PC-3 (cell line): ENCODE measurements at regions of chr9 and their contacts with region 1.

Region 1: GRCh38 chr9:100426530-100427428 is at the start of gene MSANTD3:
- DNase-seq: peak; percentile 76
- ATAC-seq: peak; percentile 59
- H3K4me3 ChIP-seq: peak within 1 kb of the TSS; percentile 92
- H3K27ac ChIP-seq: peak within 1 kb of the TSS; percentile 100
- H3K4me1 ChIP-seq: peaks cover 36% of the 10 kb centered on the region
- H3K27me3 ChIP-seq: no peaks in the 10 kb centered on the region
- CTCF ChIP-seq: no peak
- total RNA-seq, gene MSANTD3: 86.9 and 92.7 TPM in 2 replicates

Region 2: GRCh38 chr9:99819856-99820684 is 606.7 kb before region 1 on chr9:
- CTCF ChIA-PET with region 1: no interaction called
- POLR2A ChIA-PET with region 1: no interaction called
- intact Hi-C with region 1: loop called (anchors 5 kb)
- DNase-seq: peak; percentile 84
- ATAC-seq: peak; percentile 35
- H3K4me3 ChIP-seq: peak overlapping the region; percentile 89
- H3K27ac ChIP-seq: peak overlapping the region; percentile 75
- H3K4me1 ChIP-seq: peaks cover 12% of the 10 kb centered on the region; the same call in 1 of the 2 replicates
- H3K27me3 ChIP-seq: no peaks in the 10 kb centered on the region
- CTCF ChIP-seq: 0 out of 2 replicates have a peak, but pooled peaks have one; percentile 17

Region 3: GRCh38 chr9:100098887-100099721 is 327.7 kb before region 1 on chr9 and contains the starts of genes ERP44 and INVS:
- CTCF ChIA-PET with region 1: no interaction called
- POLR2A ChIA-PET with region 1: interaction called, 16 read pairs
- intact Hi-C with region 1: no loop called
- DNase-seq: peak; percentile 97
- ATAC-seq: peak; percentile 93
- H3K4me3 ChIP-seq: peak within 1 kb of the TSS; percentile 99
- H3K27ac ChIP-seq: peak within 1 kb of the TSS; percentile 71
- H3K4me1 ChIP-seq: peaks cover 28% of the 10 kb centered on the region
- H3K27me3 ChIP-seq: no peaks in the 10 kb centered on the region
- CTCF ChIP-seq: no peak
- total RNA-seq, gene ERP44: 5.8 and 7.7 TPM in 2 replicates
- total RNA-seq, gene INVS: 8.9 and 9.6 TPM in 2 replicates

Region 4: DNA sequence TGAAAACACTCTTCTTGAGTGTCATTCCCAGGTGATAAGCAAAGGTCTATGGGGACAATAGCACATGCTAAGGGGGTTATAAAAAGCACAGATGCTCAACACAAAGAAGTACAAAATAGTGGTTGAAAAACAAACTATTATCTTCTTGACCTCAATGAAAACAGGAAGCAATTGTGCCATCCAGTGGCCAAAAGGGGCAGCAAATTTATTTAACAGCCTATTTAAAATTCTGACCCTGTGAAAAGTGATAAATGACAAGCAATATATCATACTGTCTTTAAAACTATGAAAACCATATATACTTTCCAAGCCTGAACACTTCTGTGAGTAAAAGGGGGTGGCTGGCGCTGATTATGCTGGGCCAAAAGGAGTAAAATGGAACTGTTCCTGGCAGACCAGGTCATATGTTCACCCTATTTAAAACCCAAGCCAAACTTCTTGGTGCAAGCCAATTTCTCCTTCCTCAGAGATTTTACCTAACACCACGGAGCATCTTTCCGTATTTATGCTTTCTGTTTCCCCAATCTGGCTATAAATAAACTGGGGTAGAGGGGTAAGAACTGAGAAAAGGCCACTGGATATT is 103.7 kb before region 1 on chr9:
- CTCF ChIA-PET with region 1: interaction called, 13 read pairs
- POLR2A ChIA-PET with region 1: no interaction called
- intact Hi-C with region 1: no loop called
- DNase-seq: peak; percentile 44
- ATAC-seq: no peak
- H3K4me3 ChIP-seq: no peak overlapping the region
- H3K27ac ChIP-seq: no peak overlapping the region
- H3K4me1 ChIP-seq: peaks cover under 1% of the 10 kb centered on the region
- H3K27me3 ChIP-seq: no peaks in the 10 kb centered on the region
- CTCF ChIP-seq: peak; percentile 72

Region 5: DNA sequence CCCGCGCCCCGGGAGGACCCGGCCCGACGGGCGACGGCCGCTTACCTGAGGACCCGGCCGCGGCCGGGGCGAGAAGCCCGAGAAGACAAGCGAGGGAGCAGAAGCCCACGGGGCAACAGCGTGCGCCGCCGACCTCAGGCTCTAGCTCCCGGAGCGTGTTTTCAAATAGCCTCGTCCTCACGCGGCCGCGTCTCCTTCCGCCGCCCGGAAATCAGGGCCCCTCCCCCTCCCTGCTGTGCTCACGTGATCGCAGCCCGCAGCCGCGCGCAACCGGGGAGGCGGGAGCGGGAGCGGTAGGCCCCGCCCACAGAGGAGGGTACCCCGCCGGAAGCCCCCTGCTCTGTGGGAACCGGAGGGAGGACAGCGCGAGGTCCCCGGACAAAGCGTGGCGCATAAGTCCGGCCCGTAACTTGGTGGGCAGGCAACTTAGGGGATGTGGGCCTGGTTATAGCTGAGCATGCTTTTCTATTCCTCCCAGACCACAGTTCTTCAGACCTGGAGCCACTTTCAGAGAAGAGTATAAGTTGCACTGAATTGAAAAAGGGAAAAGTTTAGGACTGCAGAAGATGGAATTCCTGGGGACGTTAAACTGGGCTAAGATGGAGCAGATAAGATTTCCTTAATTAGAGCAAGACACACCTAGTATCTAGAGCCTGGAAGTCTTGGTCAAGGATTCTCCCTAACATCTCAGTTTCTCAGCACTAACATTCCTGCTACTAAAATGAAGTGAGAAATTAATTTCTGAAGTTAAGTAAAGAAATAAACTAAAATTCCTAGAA is 73.9 kb before region 1 on chr9 and contains the start of gene TEX10:
- CTCF ChIA-PET with region 1: no interaction called
- POLR2A ChIA-PET with region 1: interaction called, 11 read pairs
- intact Hi-C with region 1: loop called (anchors 2 kb)
- DNase-seq: peak; percentile 75
- ATAC-seq: peak; percentile 76
- H3K4me3 ChIP-seq: peak within 1 kb of the TSS; percentile 86
- H3K27ac ChIP-seq: peak within 1 kb of the TSS; percentile 55
- H3K4me1 ChIP-seq: peaks cover 18% of the 10 kb centered on the region
- H3K27me3 ChIP-seq: no peaks in the 10 kb centered on the region
- CTCF ChIP-seq: no peak
- total RNA-seq, gene TEX10: 19.4 and 22.1 TPM in 2 replicates

Region 6: GRCh38 chr9:100413839-100414420 is 12.8 kb before region 1 on chr9:
- CTCF ChIA-PET with region 1: no interaction called
- POLR2A ChIA-PET with region 1: interaction called, 11 read pairs
- intact Hi-C with region 1: no loop called
- DNase-seq: no peak
- ATAC-seq: no peak
- H3K4me3 ChIP-seq: no peak overlapping the region
- H3K27ac ChIP-seq: no peak overlapping the region
- H3K4me1 ChIP-seq: peaks cover 4% of the 10 kb centered on the region; the same call in 1 of the 2 replicates
- H3K27me3 ChIP-seq: no peaks in the 10 kb centered on the region
- CTCF ChIP-seq: no peak

Region 7: DNA sequence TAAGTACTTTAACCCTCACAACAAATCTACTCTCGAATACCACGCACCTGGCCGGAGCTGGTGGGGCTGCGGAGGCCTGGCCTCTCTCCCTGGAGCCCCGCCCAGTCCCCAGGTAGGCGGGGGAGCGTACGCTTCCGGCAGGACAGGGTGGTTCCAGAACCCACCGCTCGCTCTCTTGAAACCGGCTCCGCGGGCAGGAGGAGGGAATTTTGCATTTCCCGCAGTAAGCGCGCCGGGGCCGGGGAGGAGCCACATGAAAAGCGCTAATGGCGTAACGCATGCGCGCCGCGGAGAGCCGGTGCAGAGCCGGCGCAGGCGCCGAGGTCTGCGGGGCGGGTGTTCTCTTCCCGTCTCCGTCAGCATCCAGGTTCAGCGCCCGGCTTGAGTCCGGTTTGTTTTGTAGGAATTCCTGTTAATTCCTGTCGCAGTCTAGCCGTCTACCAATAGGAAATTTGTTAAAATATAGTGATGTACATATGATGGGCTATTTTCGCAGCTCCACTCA is 171.9 kb after region 1 on chr9:
- CTCF ChIA-PET with region 1: no interaction called
- POLR2A ChIA-PET with region 1: no interaction called
- intact Hi-C with region 1: loop called (anchors 5 kb)
- DNase-seq: peak; percentile 82
- ATAC-seq: peak; percentile 84
- H3K4me3 ChIP-seq: peak overlapping the region; percentile 76
- H3K27ac ChIP-seq: no peak overlapping the region
- H3K4me1 ChIP-seq: no peaks in the 10 kb centered on the region
- H3K27me3 ChIP-seq: no peaks in the 10 kb centered on the region
- CTCF ChIP-seq: no peak